CD14-positive monocyte (primary cell): ENCODE measurements at regions of chr17 and their contacts with region 1.

Region 1: GRCh38 chr17:77869665-77870132 is 88.8 kb upstream of the TNRC6C start:
- DNase-seq: peak; percentile 91 to 98 (median 96)
- H3K4me3 ChIP-seq: peak overlapping the region in 1 of 3 experiments; percentile 43
- H3K4me3 Mint-ChIP-seq: peak overlapping the region in 1 of 2 donors; percentile 72
- H3K27ac ChIP-seq: peak overlapping the region; percentile 72 to 79
- H3K27ac Mint-ChIP-seq: peak overlapping the region; percentile 88 to 95 (median 92)
- H3K4me1 ChIP-seq: peaks cover 60 to 65% of the 10 kb centered on the region in 2 donors
- H3K4me1 Mint-ChIP-seq: peaks cover 60% of the 10 kb centered on the region
- H3K27me3 ChIP-seq: no peaks in the 10 kb centered on the region
- H3K27me3 Mint-ChIP-seq: peaks cover 9 to 16% (median 13%) of the 10 kb centered on the region in 3 donors
- CTCF ChIP-seq: no peak

Region 2: DNA sequence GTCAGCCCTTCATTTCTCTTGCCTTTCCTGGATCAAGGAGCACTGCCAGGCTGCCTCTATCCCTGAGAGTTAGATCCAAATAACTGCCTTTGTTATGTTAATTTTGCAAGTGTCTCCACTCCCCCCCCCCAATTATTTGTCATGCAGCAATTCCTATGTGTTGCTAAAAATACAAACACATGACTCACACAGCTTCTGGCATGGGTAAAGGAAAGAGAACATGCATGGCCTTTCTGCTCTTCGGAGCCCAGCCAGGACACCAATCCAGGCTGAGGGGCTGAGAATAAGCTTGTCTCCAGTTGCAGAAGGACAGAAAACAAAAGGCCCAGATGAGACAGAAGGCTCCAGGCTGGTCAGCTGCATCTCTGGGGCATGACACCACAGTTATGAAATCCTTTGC is 59.2 kb before region 1 on chr17:
- intact Hi-C with region 1: no loop called
- DNase-seq: no peak
- H3K4me3 ChIP-seq: no peak overlapping the region
- H3K4me3 Mint-ChIP-seq: no peak overlapping the region
- H3K27ac ChIP-seq: no peak overlapping the region
- H3K27ac Mint-ChIP-seq: no peak overlapping the region
- H3K4me1 ChIP-seq: no peaks in the 10 kb centered on the region
- H3K4me1 Mint-ChIP-seq: no peaks in the 10 kb centered on the region
- H3K27me3 ChIP-seq: peaks cover 0 to 2% of the 10 kb centered on the region in 2 donors
- H3K27me3 Mint-ChIP-seq: peaks cover 0 to 8% (median 3%) of the 10 kb centered on the region in 3 donors
- CTCF ChIP-seq: no peak

Region 3: GRCh38 chr17:77842528-77843147 is 27.1 kb before region 1 on chr17:
- intact Hi-C with region 1: loop called in 1 of 2 experiments (anchors 2 kb)
- DNase-seq: peak; percentile 78 to 94 (median 81)
- H3K4me3 ChIP-seq: peak overlapping the region in 1 of 3 experiments; percentile 17
- H3K4me3 Mint-ChIP-seq: peak overlapping the region in 1 of 2 donors; percentile 68
- H3K27ac ChIP-seq: no peak overlapping the region
- H3K27ac Mint-ChIP-seq: peak overlapping the region in 6 of 7 donors; percentile 23 to 85 (median 56)
- H3K4me1 ChIP-seq: peaks cover 11 to 20% of the 10 kb centered on the region in 2 donors
- H3K4me1 Mint-ChIP-seq: peaks cover 50% of the 10 kb centered on the region
- H3K27me3 ChIP-seq: peaks cover 0 to 15% of the 10 kb centered on the region in 2 donors
- H3K27me3 Mint-ChIP-seq: peaks cover 39 to 48% (median 47%) of the 10 kb centered on the region in 3 donors
- CTCF ChIP-seq: no peak

Region 4: GRCh38 chr17:77887464-77888241 is 18.0 kb after region 1 on chr17:
- intact Hi-C with region 1: loop called in 1 of 2 experiments (anchors 2 kb)
- DNase-seq: peak; percentile 95 to 98 (median 98)
- H3K4me3 ChIP-seq: peak overlapping the region; percentile 32 to 69 (median 39)
- H3K4me3 Mint-ChIP-seq: peak overlapping the region; percentile 84 to 95
- H3K27ac ChIP-seq: peak overlapping the region; percentile 39 to 78
- H3K27ac Mint-ChIP-seq: peak overlapping the region; percentile 85 to 96 (median 96)
- H3K4me1 ChIP-seq: peaks cover 41 to 43% of the 10 kb centered on the region in 2 donors
- H3K4me1 Mint-ChIP-seq: peaks cover 51% of the 10 kb centered on the region
- H3K27me3 ChIP-seq: peaks cover 2 to 64% of the 10 kb centered on the region in 2 donors
- H3K27me3 Mint-ChIP-seq: peaks cover 45 to 77% (median 72%) of the 10 kb centered on the region in 3 donors
- CTCF ChIP-seq: no peak

Region 5: DNA sequence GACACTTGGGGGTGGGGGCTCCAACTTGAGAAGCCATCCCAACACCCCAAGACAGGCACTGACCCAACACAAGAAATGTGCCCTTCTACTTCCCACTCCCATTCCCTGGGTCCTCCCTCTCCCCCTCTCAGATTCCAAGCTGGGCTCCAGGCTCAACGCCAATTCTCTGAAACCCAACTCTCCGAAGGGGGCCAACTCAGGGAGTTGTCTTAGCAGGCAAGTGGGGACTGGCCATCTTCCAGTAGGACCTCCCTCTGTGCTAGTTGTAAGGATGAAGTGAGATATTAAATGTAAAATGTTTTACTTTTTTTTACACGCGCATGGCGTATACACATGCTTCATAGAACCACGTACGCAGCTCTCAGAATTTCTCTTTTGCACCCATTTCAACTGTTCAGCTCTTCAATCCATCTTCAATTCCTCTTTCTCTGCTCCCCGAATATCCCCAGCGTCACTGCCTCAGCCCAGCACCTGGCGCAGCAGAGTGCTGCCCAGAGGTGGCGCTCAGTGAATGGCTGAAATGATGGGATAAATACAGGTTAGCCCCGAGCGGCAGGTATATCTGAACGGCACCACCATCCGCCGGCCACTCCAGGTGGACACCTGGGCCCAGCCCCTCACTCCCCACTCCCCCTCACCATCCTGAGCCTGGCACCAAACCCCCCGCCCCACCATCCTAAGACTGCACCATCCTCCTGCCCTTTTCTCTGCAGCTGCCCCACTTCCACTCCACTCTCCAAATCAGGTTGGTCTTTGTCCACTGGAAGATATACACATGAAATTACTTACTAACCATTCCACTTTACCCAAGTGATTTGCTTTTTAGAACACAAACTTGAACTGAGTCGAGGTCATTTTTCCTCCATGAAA is 44.9 kb after region 1 on chr17:
- intact Hi-C with region 1: loop called in 1 of 2 experiments (anchors 2 kb)
- DNase-seq: no peak
- H3K4me3 ChIP-seq: no peak overlapping the region
- H3K4me3 Mint-ChIP-seq: peak overlapping the region in 1 of 2 donors; percentile 89
- H3K27ac ChIP-seq: no peak overlapping the region
- H3K27ac Mint-ChIP-seq: peak overlapping the region in 2 of 7 donors; percentile 11 to 74
- H3K4me1 ChIP-seq: peaks cover 18 to 19% of the 10 kb centered on the region in 2 donors
- H3K4me1 Mint-ChIP-seq: peaks cover 22% of the 10 kb centered on the region
- H3K27me3 ChIP-seq: peaks cover 41 to 68% of the 10 kb centered on the region in 2 donors
- H3K27me3 Mint-ChIP-seq: peaks cover 87 to 95% (median 94%) of the 10 kb centered on the region in 3 donors
- CTCF ChIP-seq: no peak

Region 6: GRCh38 chr17:77957857-77958715 is 88.4 kb after region 1 on chr17 and contains the start of gene TNRC6C:
- intact Hi-C with region 1: loop called in 1 of 2 experiments (anchors 10 kb)
- DNase-seq: peak; percentile 99
- H3K4me3 ChIP-seq: peak within 1 kb of the TSS; percentile 59 to 79 (median 74)
- H3K4me3 Mint-ChIP-seq: peak within 1 kb of the TSS; percentile 86 to 97
- H3K27ac ChIP-seq: peak within 1 kb of the TSS; percentile 5 to 72
- H3K27ac Mint-ChIP-seq: peak within 1 kb of the TSS in 6 of 7 donors; percentile 12 to 91 (median 58)
- H3K4me1 ChIP-seq: peaks cover 20 to 34% of the 10 kb centered on the region in 2 donors
- H3K4me1 Mint-ChIP-seq: peaks cover 28% of the 10 kb centered on the region
- H3K27me3 ChIP-seq: peaks cover 53 to 70% of the 10 kb centered on the region in 2 donors
- H3K27me3 Mint-ChIP-seq: peaks cover 68 to 73% (median 72%) of the 10 kb centered on the region in 3 donors
- CTCF ChIP-seq: no peak
- polyA plus RNA-seq, gene TNRC6C: 0.38 to 0.80 (median 0.46) TPM